Spleen (tissue), 13 donors: ENCODE measurements at regions of chr1 and their contacts with region 1.

Region 1: DNA sequence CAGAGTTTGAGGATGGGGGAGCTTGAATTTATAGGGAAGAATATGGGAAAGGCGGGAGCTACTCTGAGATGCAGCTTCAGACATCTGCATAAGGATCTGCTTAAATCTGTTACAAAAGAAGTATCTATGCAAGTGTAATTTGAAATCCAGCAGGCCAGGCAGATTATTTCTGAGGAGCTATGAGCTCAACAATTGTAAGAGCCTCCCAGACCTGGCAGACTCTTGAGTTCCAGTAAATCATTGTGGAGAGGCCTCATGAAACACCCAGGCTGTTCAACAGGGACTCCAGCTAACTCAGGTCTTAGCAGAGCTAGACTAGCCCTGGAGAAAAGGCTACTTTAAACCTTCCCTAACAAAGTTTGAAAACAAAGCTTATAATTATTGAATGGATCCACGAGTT is 647.5 kb upstream of the CHRM3 start:
- DNase-seq: no peak
- H3K4me3 ChIP-seq: no peak overlapping the region
- H3K27ac ChIP-seq: no peak overlapping the region
- H3K4me1 ChIP-seq: no peaks in the 10 kb centered on the region
- H3K27me3 ChIP-seq: no peaks in the 10 kb centered on the region
- CTCF ChIP-seq: no peak
- POLR2A ChIP-seq: no peak

Region 2: GRCh38 chr1:238727670-238728069 is 11.2 kb before region 1 on chr1:
- intact Hi-C with region 1: loop called (anchors 1 kb)
- DNase-seq: no peak
- H3K4me3 ChIP-seq: no peak overlapping the region
- H3K27ac ChIP-seq: no peak overlapping the region
- H3K4me1 ChIP-seq: no peaks in the 10 kb centered on the region
- H3K27me3 ChIP-seq: no peaks in the 10 kb centered on the region
- CTCF ChIP-seq: no peak
- POLR2A ChIP-seq: no peak

Region 3: GRCh38 chr1:238777551-238777950 is 38.7 kb after region 1 on chr1:
- intact Hi-C with region 1: no loop called
- DNase-seq: no peak
- H3K4me3 ChIP-seq: no peak overlapping the region
- H3K27ac ChIP-seq: no peak overlapping the region
- H3K4me1 ChIP-seq: no peaks in the 10 kb centered on the region
- H3K27me3 ChIP-seq: no peaks in the 10 kb centered on the region
- CTCF ChIP-seq: no peak
- POLR2A ChIP-seq: no peak